ENCODE measurements at regions of chr17 and their contacts with region 1.

Region 1: DNA sequence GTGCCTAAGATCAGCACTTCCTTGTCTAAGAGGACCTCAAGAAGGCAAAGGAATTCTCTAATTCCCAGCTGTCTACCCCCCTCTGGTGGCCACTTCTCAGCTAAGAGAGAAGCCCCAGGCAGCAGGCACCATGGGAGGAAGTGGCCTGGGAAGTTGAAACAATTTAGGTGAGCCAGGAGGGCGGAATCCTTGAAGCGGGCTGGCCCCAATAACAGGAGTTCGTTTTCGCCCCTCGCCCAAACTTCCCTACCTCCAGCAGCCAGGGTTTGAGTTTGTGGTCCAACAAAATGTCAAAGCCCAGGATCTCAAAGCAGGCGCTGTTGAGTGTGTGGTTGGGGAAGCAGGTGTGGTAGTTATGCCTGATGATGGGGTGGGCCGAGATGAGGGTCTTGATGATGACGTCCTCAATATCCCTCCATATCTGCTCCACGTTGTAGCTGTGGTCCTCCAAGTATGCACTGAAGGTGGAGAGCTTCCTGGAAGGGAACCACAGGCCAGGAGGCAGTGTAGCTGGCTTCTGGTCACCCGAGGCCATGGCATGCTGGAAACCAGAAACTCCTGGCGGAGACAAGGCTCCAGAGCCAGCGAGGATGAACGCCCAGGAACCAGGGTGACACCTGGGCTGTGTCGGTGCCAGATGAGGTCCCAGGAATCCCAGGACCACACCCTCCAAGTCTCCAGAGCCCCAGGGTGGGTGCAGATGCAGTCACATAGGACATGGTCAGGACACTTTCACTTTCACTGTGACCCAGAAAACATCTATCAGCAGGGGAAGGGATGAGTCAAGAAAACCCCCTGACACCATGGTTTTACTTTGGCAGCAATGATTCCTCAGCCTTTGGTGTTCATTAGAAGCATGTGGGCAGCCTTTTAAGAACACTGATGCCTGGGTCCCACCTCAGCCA is 25.6 kb downstream of the TTLL6 start:
- DNase-seq: peak in 3 of 4 donors; percentile 72 to 85 (median 72)
- ATAC-seq: peak; percentile 97
- H3K4me3 ChIP-seq: no peak overlapping the region
- H3K27ac ChIP-seq: no peak overlapping the region
- H3K4me1 ChIP-seq: no peaks in the 10 kb centered on the region
- H3K27me3 ChIP-seq: peaks cover 0 to 37% of the 10 kb centered on the region in 2 donors
- CTCF ChIP-seq: peak; percentile 65 to 75

Region 2: GRCh38 chr17:48610282-48611211 is 180.8 kb before region 1 on chr17 and contains the start of gene HOXB7:
- intact Hi-C with region 1: no loop called
- DNase-seq: peak in 3 of 4 donors; percentile 72 to 83 (median 73)
- ATAC-seq: peak; percentile 52
- H3K4me3 ChIP-seq: peak within 1 kb of the TSS; percentile 41 to 48
- H3K27ac ChIP-seq: peak within 1 kb of the TSS; percentile 71 to 82
- H3K4me1 ChIP-seq: peaks cover 0 to 49% of the 10 kb centered on the region in 2 donors
- H3K27me3 ChIP-seq: peaks cover 86 to 100% of the 10 kb centered on the region in 2 donors
- CTCF ChIP-seq: no peak
- polyA plus RNA-seq, gene HOXB7: 6.1 to 10.5 (median 7.2) TPM

Region 3: DNA sequence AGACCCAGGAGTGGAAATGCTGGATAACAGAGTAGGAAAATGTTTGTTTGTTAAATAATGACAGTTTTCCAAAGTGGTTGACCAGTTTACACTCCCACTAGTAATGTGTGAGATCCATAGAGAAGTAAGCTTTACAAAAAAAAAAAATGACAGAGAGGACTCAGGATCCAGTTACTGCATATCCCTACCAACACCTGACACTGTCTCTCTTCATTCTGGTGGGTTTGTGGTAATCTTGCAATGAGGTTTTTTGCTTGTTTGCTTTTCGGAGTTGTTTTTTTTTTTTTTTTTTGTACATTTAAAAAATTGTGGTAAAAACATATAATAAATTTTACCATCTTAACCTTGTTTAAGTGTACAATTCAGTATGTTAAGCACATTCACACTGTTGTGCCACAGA is 141.6 kb before region 1 on chr17:
- intact Hi-C with region 1: no loop called
- DNase-seq: no peak
- ATAC-seq: no peak
- H3K4me3 ChIP-seq: no peak overlapping the region
- H3K27ac ChIP-seq: no peak overlapping the region
- H3K4me1 ChIP-seq: peaks cover 0 to 14% of the 10 kb centered on the region in 2 donors
- H3K27me3 ChIP-seq: peaks cover 49 to 93% of the 10 kb centered on the region in 2 donors
- CTCF ChIP-seq: no peak

Region 4: GRCh38 chr17:48663134-48663924 is 128.1 kb before region 1 on chr17:
- intact Hi-C with region 1: no loop called
- DNase-seq: no peak
- ATAC-seq: no peak
- H3K4me3 ChIP-seq: no peak overlapping the region
- H3K27ac ChIP-seq: no peak overlapping the region
- H3K4me1 ChIP-seq: no peaks in the 10 kb centered on the region
- H3K27me3 ChIP-seq: peaks cover 0 to 88% of the 10 kb centered on the region in 2 donors
- CTCF ChIP-seq: no peak

Region 5: GRCh38 chr17:48724251-48725003 is 67.0 kb before region 1 on chr17:
- intact Hi-C with region 1: loop called in 1 of 2 experiments (anchors 10 kb)
- DNase-seq: peak; percentile 68 to 87 (median 80)
- ATAC-seq: peak; percentile 93
- H3K4me3 ChIP-seq: no peak overlapping the region
- H3K27ac ChIP-seq: no peak overlapping the region
- H3K4me1 ChIP-seq: peaks cover 9 to 32% of the 10 kb centered on the region in 2 donors
- H3K27me3 ChIP-seq: peaks cover 98 to 100% of the 10 kb centered on the region in 2 donors
- CTCF ChIP-seq: peak; percentile 62 to 71